ENCODE measurements at regions of chr2 and their contacts with region 1.

Region 1: DNA sequence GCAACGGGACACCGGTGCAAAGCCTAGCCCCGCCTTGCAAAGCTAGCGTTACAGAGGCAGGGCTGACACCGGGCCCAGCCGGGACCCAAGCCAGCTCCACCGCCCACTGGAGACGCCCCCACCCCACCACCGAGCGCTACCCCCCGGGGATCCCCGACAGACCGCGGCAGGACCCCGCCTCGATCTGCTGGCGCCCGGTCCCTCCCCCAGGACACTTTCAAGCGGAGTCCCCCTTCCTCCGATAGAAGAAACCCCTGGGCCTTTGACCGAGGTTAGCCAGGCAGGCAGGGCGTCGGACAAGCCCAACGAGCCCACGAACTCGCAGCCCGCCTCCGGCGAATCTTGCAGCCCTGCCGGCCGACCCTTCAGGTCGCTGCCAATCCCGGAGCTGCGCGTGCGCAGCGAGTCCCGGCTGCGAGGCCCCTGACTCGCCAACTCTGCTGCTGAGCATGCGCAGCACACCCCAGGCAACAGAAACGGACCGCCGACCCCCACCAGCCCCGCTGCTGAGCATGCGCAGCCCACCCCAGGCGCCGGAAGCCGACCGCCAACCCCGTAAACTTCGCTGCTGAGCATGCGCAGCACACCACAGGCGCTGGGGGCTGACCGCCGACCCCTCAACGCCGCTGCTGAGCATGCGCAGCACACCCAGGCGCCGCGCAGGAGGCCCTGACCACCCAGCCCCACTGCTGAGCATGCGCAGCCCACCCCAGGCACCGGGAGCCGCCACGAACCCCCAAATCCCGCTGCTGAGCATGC is 656 bp downstream of the ADI1 start:
- DNase-seq: peak; percentile 99 to 100
- ATAC-seq: peak; percentile 81 to 92
- H3K4me3 ChIP-seq: peak overlapping the region; percentile 71
- H3K27ac ChIP-seq: peak overlapping the region; percentile 95 to 97
- H3K4me1 ChIP-seq: peaks cover 24% of the 10 kb centered on the region
- CTCF ChIP-seq: no peak
- EP300 ChIP-seq: no peak
- POLR2A ChIP-seq: peak; percentile 95
- RAD21 ChIP-seq: no peak

Region 2: DNA sequence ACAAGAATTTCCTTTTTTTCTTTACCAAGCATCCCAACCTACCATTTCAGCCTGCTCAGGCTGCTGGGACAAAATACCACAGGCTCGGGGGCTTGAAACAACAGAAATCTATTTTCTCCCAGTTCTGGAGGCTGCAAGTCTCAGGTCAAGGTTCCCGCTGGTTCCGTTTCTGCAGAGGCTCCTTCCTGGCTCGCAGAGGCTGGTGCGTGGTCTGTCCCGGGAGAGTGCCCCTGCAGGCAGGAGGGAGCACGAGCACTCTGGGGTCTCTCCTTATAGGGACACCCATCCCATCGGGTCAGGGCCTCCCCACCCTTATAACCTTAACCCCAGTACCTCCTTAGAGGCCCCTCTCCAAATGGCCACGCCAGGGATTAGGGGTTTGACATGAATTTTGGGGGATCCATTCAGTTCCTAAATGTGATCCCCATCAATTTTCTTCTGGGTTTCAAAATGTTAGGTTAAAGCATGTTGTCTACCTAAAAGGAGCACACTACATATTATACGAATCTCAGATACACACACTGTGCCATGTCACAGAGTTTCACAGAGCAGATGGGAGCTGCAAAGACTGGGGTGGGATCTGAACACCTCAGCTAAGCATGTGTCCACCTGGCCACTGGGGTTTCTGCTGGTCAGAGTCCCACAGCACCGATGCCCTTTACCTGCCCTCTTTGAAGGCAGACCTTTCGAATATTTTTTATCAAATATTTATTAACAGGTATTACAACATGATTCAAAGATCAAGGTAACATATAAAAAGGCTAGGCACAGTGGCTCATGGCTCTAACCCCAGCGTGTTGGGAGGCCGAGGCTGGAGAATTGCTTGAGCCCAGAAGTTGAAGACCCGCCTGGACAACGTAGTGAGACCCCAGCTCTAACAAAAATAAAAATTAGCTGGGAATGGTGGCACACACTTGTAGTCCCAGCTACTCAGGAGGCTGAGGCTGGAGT is 18.3 kb after region 1 on chr2:
- CTCF ChIA-PET with region 1: interaction called, 25 read pairs
- POLR2A ChIA-PET with region 1: interaction called, 5 read pairs
- DNase-seq: peak; percentile 72 to 81
- ATAC-seq: peak; percentile 87 to 92
- H3K4me3 ChIP-seq: peak overlapping the region; percentile 45
- H3K27ac ChIP-seq: peak overlapping the region; percentile 80 to 88
- H3K4me1 ChIP-seq: peaks cover 18% of the 10 kb centered on the region
- CTCF ChIP-seq: peak; percentile 43; the same call in 2 of the 3 replicates
- EP300 ChIP-seq: no peak
- POLR2A ChIP-seq: no peak
- RAD21 ChIP-seq: peak in 1 of 2 experiments; percentile 8; a peak in 1 of 5 replicates

Region 3: DNA sequence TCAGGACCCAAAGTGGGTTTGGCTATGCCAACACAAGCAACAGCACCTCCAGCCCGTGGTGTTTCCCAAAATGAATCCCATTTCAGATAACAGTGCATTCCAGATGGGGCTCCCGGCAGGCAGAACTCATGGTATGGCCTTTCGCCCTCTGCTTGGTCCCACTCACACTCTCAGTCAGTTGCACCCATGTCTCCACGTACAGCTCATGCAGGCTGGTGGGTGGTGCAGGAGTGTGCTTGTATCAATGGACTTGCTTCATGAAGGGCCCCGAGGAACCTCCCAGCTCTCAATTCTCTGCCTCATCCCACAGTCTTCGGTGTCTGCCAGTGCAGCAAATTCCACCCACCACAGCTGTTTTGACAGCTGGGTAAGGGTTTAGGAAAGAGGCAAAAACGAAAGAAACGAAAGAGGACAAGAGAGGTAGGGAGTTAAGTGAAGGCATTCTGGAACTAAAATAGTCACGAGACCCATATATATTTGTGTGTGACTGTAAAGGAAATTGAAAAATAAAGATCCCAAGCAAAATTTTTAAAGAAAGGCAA is 462.8 kb after region 1 on chr2:
- CTCF ChIA-PET with region 1: no interaction called
- POLR2A ChIA-PET with region 1: no interaction called
- DNase-seq: no peak
- ATAC-seq: no peak
- H3K4me3 ChIP-seq: no peak overlapping the region
- H3K27ac ChIP-seq: no peak overlapping the region
- H3K4me1 ChIP-seq: no peaks in the 10 kb centered on the region
- CTCF ChIP-seq: no peak
- EP300 ChIP-seq: no peak
- POLR2A ChIP-seq: no peak
- RAD21 ChIP-seq: no peak